CD4-positive, alpha-beta memory T cell (primary cell): ENCODE measurements at regions of chr20 and their contacts with region 1.

Region 1: DNA sequence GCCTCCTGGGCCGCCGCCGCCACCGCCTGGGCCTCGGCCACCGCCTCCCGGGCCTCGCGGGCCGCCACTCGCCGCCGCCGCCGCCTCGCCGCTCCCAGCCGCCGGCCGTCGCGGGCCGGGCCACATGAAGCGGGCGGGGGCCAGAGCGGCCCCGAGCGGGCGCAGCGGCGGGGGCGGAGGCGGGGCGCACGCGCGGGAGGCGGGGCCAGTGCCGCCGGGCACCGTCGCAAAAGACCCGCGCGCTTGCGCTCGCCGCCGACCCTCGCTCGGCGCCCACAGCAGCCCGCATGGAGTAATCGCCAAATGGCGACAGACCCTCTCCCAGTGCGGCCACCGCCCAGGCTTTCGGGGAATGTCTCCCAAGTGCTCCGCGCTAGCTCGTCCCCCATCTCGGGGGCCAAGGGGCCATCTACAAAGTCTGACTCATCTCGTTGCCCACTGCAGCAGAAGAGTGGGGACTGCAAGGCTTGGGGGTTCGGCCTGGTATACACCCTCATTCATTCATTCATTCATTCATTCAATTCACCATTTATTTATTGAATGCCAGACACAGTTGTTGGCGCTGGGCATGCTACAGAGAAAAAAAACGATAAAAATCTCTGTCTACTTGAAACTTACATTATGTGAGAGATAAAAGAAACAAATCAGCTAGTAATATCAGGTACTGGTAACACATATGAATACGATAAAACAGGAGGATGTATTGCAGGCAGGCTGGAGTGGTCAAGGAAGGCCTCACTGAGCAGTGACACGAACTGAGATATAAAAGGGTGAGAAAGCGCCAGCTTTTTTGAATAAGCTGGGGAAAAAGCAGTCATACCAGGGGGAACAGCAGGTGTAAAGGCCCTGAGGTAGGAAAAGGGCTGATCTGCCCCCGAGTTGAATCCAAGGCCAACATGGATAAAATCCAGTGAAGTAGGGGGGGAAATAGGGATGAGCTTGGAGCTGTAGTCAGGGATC is at the start of gene B4GALT5:
- DNase-seq: peak; percentile 56 to 73 (median 61)
- H3K4me3 ChIP-seq: peak within 1 kb of the TSS; percentile 44 to 85
- H3K4me3 Mint-ChIP-seq: peak within 1 kb of the TSS; percentile 85 to 94 (median 90)
- H3K27ac ChIP-seq: peak within 1 kb of the TSS; percentile 66
- H3K27ac Mint-ChIP-seq: peak within 1 kb of the TSS; percentile 69 to 95 (median 84)
- H3K4me1 ChIP-seq: peaks cover 45% of the 10 kb centered on the region
- H3K4me1 Mint-ChIP-seq: peaks cover 31 to 52% (median 43%) of the 10 kb centered on the region in 4 donors
- H3K27me3 ChIP-seq: no peaks in the 10 kb centered on the region
- H3K27me3 Mint-ChIP-seq: no peaks in the 10 kb centered on the region
- total RNA-seq, gene B4GALT5: 5.5 to 6.2 TPM

Region 2: DNA sequence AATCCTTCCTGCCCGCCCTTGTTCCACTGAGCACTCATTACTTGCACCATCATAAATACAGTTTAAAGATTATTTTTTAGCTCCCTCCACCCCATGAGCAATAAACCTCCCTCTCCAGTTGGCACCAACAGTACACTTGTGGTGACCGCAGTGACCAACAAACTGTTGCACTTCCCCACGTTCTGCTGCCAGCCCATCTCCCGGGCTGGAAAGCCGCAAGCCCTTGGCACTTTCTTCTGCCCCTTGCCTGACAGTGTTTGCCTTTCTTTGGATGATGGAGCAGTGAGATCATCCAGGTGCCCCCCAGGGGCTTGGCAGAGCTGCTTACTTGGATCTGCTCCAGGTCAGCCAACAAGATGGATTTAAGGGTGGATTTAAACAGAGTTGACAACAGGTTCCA is 253.1 kb before region 1 on chr20:
- CTCF ChIA-PET with region 1: no interaction called
- POLR2A ChIA-PET with region 1: no interaction called
- intact Hi-C with region 1: no loop called
- DNase-seq: no peak
- H3K4me3 ChIP-seq: no peak overlapping the region
- H3K4me3 Mint-ChIP-seq: no peak overlapping the region
- H3K27ac ChIP-seq: no peak overlapping the region
- H3K27ac Mint-ChIP-seq: no peak overlapping the region
- H3K4me1 ChIP-seq: no peaks in the 10 kb centered on the region
- H3K4me1 Mint-ChIP-seq: no peaks in the 10 kb centered on the region
- H3K27me3 ChIP-seq: no peaks in the 10 kb centered on the region
- H3K27me3 Mint-ChIP-seq: peaks cover 17 to 24% of the 10 kb centered on the region in 2 donors

Region 3: GRCh38 chr20:49676581-49677291 is 37.3 kb before region 1 on chr20:
- CTCF ChIA-PET with region 1: interaction called, 3 read pairs
- POLR2A ChIA-PET with region 1: interaction called, 5 read pairs
- intact Hi-C with region 1: loop called (anchors 5 kb)
- DNase-seq: peak; percentile 52 to 83 (median 75)
- H3K4me3 ChIP-seq: no peak overlapping the region
- H3K4me3 Mint-ChIP-seq: peak overlapping the region in 7 of 8 donors; percentile 40 to 80 (median 69)
- H3K27ac ChIP-seq: peak overlapping the region; percentile 42
- H3K27ac Mint-ChIP-seq: peak overlapping the region; percentile 82 to 93 (median 88)
- H3K4me1 ChIP-seq: peaks cover 77% of the 10 kb centered on the region
- H3K4me1 Mint-ChIP-seq: peaks cover 42 to 88% (median 70%) of the 10 kb centered on the region in 4 donors
- H3K27me3 ChIP-seq: no peaks in the 10 kb centered on the region
- H3K27me3 Mint-ChIP-seq: no peaks in the 10 kb centered on the region

Region 4: GRCh38 chr20:49812463-49813304 is 98.7 kb after region 1 on chr20 and contains the start of gene SLC9A8:
- CTCF ChIA-PET with region 1: no interaction called
- POLR2A ChIA-PET with region 1: interaction called, 4 read pairs
- intact Hi-C with region 1: loop called (anchors 2 kb)
- DNase-seq: peak; percentile 76 to 94 (median 82)
- H3K4me3 ChIP-seq: peak within 1 kb of the TSS; percentile 62 to 66
- H3K4me3 Mint-ChIP-seq: peak within 1 kb of the TSS; percentile 92 to 98 (median 96)
- H3K27ac ChIP-seq: peak within 1 kb of the TSS; percentile 93
- H3K27ac Mint-ChIP-seq: peak within 1 kb of the TSS; percentile 98 to 99 (median 99)
- H3K4me1 ChIP-seq: peaks cover 23% of the 10 kb centered on the region
- H3K4me1 Mint-ChIP-seq: peaks cover 22 to 50% (median 32%) of the 10 kb centered on the region in 4 donors
- H3K27me3 ChIP-seq: no peaks in the 10 kb centered on the region
- H3K27me3 Mint-ChIP-seq: no peaks in the 10 kb centered on the region
- total RNA-seq, gene SLC9A8: 24.4 to 25.6 TPM

Region 5: GRCh38 chr20:49915378-49916145 is 201.5 kb after region 1 on chr20 and contains the start of gene SPATA2:
- CTCF ChIA-PET with region 1: no interaction called
- POLR2A ChIA-PET with region 1: no interaction called
- intact Hi-C with region 1: loop called (anchors 10 kb)
- DNase-seq: peak; percentile 93 to 97 (median 94)
- H3K4me3 ChIP-seq: peak within 1 kb of the TSS; percentile 85 to 99
- H3K4me3 Mint-ChIP-seq: peak within 1 kb of the TSS; percentile 98 to 99 (median 99)
- H3K27ac ChIP-seq: peak within 1 kb of the TSS; percentile 97
- H3K27ac Mint-ChIP-seq: peak within 1 kb of the TSS; percentile 98 to 100 (median 100)
- H3K4me1 ChIP-seq: peaks cover 24% of the 10 kb centered on the region
- H3K4me1 Mint-ChIP-seq: peaks cover 20 to 47% (median 33%) of the 10 kb centered on the region in 4 donors
- H3K27me3 ChIP-seq: no peaks in the 10 kb centered on the region
- H3K27me3 Mint-ChIP-seq: peaks cover 0 to 2% of the 10 kb centered on the region in 2 donors
- total RNA-seq, gene SPATA2: 8.7 to 9.3 TPM

Region 6: DNA sequence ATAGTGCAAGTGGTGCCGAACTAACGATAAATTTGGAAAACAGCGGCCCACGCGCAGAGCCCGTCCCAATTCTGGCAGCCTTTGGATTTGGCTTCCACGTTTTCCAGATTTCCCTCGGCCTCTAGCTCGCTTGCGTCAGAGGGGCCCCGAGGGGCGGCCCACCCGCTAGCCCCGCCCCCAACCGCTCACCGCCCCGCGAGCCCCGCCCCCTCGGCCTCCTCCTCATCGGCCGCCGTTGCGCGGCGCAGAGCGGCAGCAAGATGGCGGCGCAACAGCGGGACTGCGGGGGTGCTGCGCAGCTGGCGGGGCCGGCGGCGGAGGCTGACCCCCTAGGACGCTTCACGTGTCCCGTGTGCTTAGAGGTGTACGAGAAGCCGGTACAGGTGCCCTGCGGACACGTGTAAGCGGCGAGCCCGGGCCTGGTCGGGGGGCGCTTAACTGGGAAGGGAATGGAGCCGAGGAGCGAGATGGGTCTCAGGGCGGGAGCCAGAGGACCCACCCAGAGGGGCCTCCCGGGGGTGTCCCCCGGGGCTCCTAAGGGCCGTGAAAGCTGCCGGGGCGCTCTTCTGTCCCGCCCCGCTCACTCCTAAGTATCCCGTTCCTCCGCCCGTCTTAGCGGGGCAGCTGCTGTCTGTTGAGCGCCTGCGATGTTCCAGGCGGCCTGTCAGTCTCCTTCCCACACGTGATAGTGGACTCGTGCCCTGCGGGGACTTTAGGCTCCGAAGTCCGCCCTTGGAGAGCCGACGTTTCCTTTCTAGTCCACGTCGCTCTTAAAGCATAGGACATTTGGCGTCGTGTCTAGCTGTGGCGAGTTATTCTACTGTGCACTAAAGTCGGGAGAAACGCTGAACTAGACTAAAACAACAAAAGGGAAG is 222.4 kb after region 1 on chr20 and contains the start of gene RNF114:
- CTCF ChIA-PET with region 1: no interaction called
- POLR2A ChIA-PET with region 1: interaction called, 4 read pairs
- intact Hi-C with region 1: loop called (anchors 5 kb)
- DNase-seq: peak; percentile 85 to 87 (median 86)
- H3K4me3 ChIP-seq: peak within 1 kb of the TSS; percentile 88 to 100
- H3K4me3 Mint-ChIP-seq: peak within 1 kb of the TSS; percentile 97 to 99 (median 98)
- H3K27ac ChIP-seq: peak within 1 kb of the TSS; percentile 88
- H3K27ac Mint-ChIP-seq: peak within 1 kb of the TSS; percentile 83 to 98 (median 95)
- H3K4me1 ChIP-seq: peaks cover 40% of the 10 kb centered on the region
- H3K4me1 Mint-ChIP-seq: peaks cover 38 to 50% (median 43%) of the 10 kb centered on the region in 4 donors
- H3K27me3 ChIP-seq: no peaks in the 10 kb centered on the region
- H3K27me3 Mint-ChIP-seq: no peaks in the 10 kb centered on the region
- total RNA-seq, gene RNF114: 96.3 to 101 TPM

Region 7: DNA sequence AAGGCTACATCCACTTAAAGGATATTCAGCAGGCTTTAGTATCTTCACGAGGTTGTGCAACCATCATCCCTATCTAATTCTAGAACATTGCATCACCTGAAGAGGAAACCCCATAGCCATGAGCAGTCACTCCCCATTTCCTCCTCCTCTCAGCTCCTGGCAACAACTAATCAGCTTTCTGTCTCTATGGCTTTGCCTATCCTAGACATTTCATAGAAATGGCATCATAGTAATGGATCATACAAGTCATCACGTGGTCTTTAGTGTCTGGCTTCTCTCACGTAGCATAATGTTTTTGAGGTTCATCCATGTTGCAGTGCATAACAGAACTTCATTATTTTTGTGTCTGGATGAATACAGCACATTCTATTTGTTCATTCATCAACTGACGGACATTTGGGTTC is 289.2 kb after region 1 on chr20:
- CTCF ChIA-PET with region 1: no interaction called
- POLR2A ChIA-PET with region 1: no interaction called
- intact Hi-C with region 1: no loop called
- DNase-seq: no peak
- H3K4me3 ChIP-seq: no peak overlapping the region
- H3K4me3 Mint-ChIP-seq: no peak overlapping the region
- H3K27ac ChIP-seq: no peak overlapping the region
- H3K27ac Mint-ChIP-seq: peak overlapping the region in 1 of 7 donors; percentile 58
- H3K4me1 ChIP-seq: no peaks in the 10 kb centered on the region
- H3K4me1 Mint-ChIP-seq: peaks cover 0 to 2% (median 0%) of the 10 kb centered on the region in 4 donors
- H3K27me3 ChIP-seq: no peaks in the 10 kb centered on the region
- H3K27me3 Mint-ChIP-seq: peaks cover 12 to 22% of the 10 kb centered on the region in 2 donors